Caco-2 (cell line): ENCODE measurements at regions of chr16 and their contacts with region 1.

Region 1: DNA sequence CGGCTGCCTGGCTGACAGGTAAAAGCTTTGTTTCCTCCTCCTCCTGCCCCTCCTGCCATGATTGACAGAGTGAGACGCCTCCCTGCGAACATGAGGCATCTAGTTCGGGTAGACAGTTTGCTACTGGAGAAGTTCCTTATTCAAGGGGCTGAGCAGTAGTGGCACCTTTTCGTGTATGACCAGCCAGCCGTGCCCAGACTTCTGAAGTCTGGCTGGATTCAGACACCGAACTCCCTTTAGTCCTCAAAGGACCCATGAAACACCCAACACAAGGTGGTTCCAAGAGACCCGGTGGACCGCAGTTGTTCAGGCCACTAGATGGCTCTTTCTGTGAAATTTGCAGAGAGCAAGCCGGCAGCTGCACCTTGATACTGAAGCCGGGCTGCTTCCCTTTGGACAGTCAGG is 192.8 kb downstream of the XYLT1 start:
- DNase-seq: peak; percentile 44 to 45
- H3K4me3 ChIP-seq: no peak overlapping the region
- H3K4me3 Mint-ChIP-seq: no peak overlapping the region
- H3K27ac Mint-ChIP-seq: no peak overlapping the region
- H3K4me1 ChIP-seq: peaks cover 40% of the 10 kb centered on the region
- H3K4me1 Mint-ChIP-seq: peaks cover 19% of the 10 kb centered on the region
- H3K27me3 ChIP-seq: no peaks in the 10 kb centered on the region
- H3K27me3 Mint-ChIP-seq: no peaks in the 10 kb centered on the region
- CTCF ChIP-seq: peak in 1 of 2 experiments; percentile 63

Region 2: DNA sequence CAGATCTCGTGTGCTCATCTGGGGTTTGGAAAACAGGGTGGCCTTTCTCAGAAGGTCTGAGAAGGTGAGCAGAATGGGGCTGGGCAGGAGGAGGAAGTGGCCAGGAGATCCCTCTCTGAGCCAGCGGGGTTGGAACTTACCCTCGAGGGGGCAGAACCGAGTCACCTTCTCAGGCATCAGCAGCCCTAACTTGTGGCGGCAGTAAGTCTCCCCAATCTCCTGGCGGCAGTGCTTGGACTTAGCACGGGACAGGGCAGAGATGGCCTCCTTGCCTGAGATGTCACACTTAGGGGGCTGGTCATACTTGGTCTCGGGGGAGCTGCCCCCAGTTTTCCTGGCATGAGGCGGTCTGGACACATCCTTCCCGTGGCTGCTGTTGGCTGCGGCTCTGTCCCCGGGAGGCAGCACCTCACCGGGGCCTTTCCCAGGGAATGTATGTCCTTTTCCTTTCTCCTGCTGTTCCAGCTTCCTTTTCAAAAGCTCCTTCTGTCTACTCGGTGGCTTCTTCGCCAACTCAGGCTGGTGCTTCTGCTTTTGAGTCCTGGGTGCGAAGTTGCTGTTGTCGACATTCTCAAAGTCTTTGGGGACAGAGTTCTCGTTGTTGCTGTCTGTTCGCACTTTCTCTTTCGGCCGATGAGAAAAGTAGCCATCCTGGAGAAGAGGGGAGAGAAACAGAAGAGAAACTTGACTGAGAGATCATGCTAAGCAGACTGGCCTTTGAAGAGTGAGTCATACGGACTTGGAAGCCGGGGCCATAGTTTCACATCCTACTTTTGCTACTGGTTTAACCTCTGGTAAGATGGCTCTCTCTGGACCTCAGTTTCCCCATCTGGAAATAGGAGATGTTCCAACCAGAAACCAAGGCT is 18.9 kb before region 1 on chr16:
- CTCF ChIA-PET with region 1: no interaction called
- POLR2A ChIA-PET with region 1: no interaction called
- intact Hi-C with region 1: no loop called
- DNase-seq: no peak
- H3K4me3 ChIP-seq: no peak overlapping the region
- H3K4me3 Mint-ChIP-seq: no peak overlapping the region
- H3K27ac Mint-ChIP-seq: no peak overlapping the region
- H3K4me1 ChIP-seq: no peaks in the 10 kb centered on the region
- H3K4me1 Mint-ChIP-seq: no peaks in the 10 kb centered on the region
- H3K27me3 ChIP-seq: no peaks in the 10 kb centered on the region
- H3K27me3 Mint-ChIP-seq: no peaks in the 10 kb centered on the region
- CTCF ChIP-seq: no peak

Region 3: GRCh38 chr16:17301593-17302135 is 23.7 kb after region 1 on chr16:
- CTCF ChIA-PET with region 1: no interaction called
- POLR2A ChIA-PET with region 1: no interaction called
- intact Hi-C with region 1: loop called (anchors 1 kb)
- DNase-seq: no peak
- H3K4me3 ChIP-seq: no peak overlapping the region
- H3K4me3 Mint-ChIP-seq: no peak overlapping the region
- H3K27ac Mint-ChIP-seq: no peak overlapping the region
- H3K4me1 ChIP-seq: peaks cover 45% of the 10 kb centered on the region
- H3K4me1 Mint-ChIP-seq: peaks cover 27% of the 10 kb centered on the region
- H3K27me3 ChIP-seq: no peaks in the 10 kb centered on the region
- H3K27me3 Mint-ChIP-seq: no peaks in the 10 kb centered on the region
- CTCF ChIP-seq: no peak

Region 4: GRCh38 chr16:17343028-17343427 is 65.0 kb after region 1 on chr16:
- CTCF ChIA-PET with region 1: no interaction called
- POLR2A ChIA-PET with region 1: no interaction called
- intact Hi-C with region 1: loop called (anchors 10 kb)
- DNase-seq: no peak
- H3K4me3 ChIP-seq: no peak overlapping the region
- H3K4me3 Mint-ChIP-seq: no peak overlapping the region
- H3K27ac Mint-ChIP-seq: no peak overlapping the region
- H3K4me1 ChIP-seq: no peaks in the 10 kb centered on the region
- H3K4me1 Mint-ChIP-seq: peaks cover 7% of the 10 kb centered on the region
- H3K27me3 ChIP-seq: no peaks in the 10 kb centered on the region
- H3K27me3 Mint-ChIP-seq: no peaks in the 10 kb centered on the region
- CTCF ChIP-seq: no peak

Region 5: DNA sequence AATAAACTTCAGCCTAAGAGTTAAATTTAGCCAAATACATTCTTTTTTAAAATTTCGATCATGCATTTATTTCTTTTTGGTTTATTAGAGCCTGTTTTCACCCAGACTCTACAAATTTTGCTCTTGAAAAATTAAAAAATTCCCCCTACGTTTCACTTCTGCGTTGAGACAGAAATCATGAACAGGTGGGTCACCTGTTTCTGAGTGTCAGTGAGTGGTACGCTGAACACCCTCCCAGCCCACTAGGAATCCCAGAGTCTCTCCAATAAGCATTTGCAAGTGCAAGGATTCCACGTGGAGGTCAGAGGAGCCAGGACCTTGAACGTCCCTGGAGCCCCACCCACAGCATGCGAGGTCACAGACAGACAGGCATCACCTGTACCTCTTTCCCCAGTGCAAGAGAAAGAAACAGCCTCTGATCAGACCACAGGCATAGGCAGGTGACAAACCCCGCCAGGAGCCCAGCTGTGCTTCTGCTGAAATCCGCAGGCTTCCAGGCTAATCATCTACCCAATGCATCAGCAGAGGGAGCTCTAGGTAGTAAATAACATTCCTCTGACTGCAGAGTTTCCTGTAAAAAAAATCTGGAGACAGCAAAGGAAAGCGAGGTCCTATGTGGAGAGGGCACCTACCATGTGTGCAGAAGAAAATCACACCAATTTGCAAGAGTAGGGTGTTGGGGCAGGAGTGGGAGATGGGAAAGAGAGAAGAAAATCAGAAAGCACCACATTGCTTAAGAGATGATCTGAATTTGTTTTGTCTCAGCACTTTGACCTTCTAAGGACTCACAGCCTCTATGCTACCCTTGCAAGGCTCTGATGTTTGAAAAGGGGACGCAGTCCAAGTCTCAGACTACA is 198.7 kb after region 1 on chr16:
- CTCF ChIA-PET with region 1: no interaction called
- POLR2A ChIA-PET with region 1: no interaction called
- intact Hi-C with region 1: no loop called
- DNase-seq: peak; percentile 72 to 77
- H3K4me3 ChIP-seq: no peak overlapping the region
- H3K4me3 Mint-ChIP-seq: peak overlapping the region; percentile 41
- H3K27ac Mint-ChIP-seq: peak overlapping the region; percentile 57
- H3K4me1 ChIP-seq: peaks cover 52% of the 10 kb centered on the region
- H3K4me1 Mint-ChIP-seq: peaks cover 33% of the 10 kb centered on the region
- H3K27me3 ChIP-seq: no peaks in the 10 kb centered on the region
- H3K27me3 Mint-ChIP-seq: no peaks in the 10 kb centered on the region
- CTCF ChIP-seq: peak; percentile 38 to 68